Endothelial cell of umbilical vein (primary cell): ENCODE measurements at regions of chr3 and their contacts with region 1.

Region 1: DNA sequence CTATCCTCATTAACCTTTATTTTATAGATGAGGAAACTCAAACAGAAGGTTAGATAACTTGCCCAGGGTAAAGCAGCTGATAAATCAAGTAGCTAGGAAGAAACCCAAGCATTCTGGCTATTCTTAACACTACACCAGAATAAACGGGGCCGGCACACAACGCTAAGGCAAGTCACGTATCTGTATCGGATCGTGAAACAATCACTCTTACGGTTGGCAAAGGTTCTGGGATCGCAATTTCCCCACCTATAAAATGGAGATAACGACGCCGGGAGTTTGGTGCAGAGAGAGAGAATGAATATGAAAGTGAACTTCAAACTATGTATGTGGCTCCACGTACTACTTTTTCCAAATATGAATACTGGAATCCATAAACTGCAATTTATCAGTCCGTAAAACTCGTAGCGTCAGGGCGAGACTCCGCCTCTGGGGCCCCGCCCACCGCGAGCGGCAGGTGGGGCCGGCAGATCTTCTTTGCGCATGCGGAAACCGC is 252 bp upstream of the ARMC8 start:
- DNase-seq: peak; percentile 94
- H3K4me3 ChIP-seq: peak overlapping the region; percentile 74 to 86 (median 81)
- H3K27ac ChIP-seq: peak overlapping the region; percentile 93
- H3K4me1 ChIP-seq: peaks cover 10% of the 10 kb centered on the region
- H3K27me3 ChIP-seq: peaks cover 2 to 5% of the 10 kb centered on the region in 2 experiments
- CTCF ChIP-seq: no peak
- POLR2A ChIP-seq: no peak

Region 2: DNA sequence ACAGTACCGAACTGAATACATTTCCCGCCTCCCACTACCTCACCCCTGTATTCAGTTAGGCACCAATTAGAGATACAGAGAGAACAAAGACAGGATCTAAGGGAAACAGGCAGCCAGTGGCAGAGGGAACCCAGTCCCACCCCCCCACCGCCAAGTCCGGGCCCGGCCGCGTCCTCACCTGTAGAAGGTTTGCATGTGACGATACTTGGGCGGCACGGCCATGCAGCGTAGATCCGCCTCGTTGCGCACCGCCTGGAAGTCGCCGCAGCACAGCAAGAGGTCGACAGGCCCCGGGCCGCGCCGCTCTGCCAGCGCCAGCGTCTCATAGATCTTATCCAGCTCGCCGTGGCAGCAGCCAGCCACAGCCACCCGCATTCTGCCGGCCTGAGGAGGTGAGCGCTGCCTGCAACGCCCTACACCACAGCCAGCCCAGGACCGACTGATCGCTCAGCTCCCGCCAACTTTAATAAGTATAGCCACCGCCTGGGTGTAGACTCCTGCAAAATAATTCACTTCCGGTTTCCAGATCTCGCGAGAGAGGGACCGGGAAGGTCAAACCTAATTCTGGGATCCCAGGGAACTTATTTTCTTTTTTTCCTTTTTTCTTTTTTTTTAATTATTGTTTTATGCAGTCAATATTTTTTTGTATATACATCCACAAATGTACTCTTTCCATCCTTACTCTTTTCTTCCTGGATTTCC is 12.3 kb before region 1 on chr3 and contains the start of gene DBR1:
- CTCF ChIA-PET with region 1: interaction called, 17 read pairs
- POLR2A ChIA-PET with region 1: interaction called, 8 read pairs
- dilution Hi-C with region 1: no loop called
- intact Hi-C with region 1: loop called (anchors 1 kb)
- DNase-seq: peak; percentile 81
- H3K4me3 ChIP-seq: peak within 1 kb of the TSS; percentile 42 to 84 (median 61)
- H3K27ac ChIP-seq: peak within 1 kb of the TSS; percentile 46
- H3K4me1 ChIP-seq: peaks cover 13% of the 10 kb centered on the region
- H3K27me3 ChIP-seq: peaks cover 0 to 3% of the 10 kb centered on the region in 2 experiments
- CTCF ChIP-seq: no peak
- POLR2A ChIP-seq: peak; percentile 96
- total RNA-seq, gene DBR1: 16.5 and 17.8 TPM in 2 replicates

Region 3: GRCh38 chr3:138219255-138219654 is 32.4 kb after region 1 on chr3:
- CTCF ChIA-PET with region 1: no interaction called
- POLR2A ChIA-PET with region 1: no interaction called
- dilution Hi-C with region 1: no loop called
- intact Hi-C with region 1: loop called (anchors 2 kb)
- DNase-seq: peak; percentile 64
- H3K4me3 ChIP-seq: peak overlapping the region in 1 of 3 experiments; percentile 15
- H3K27ac ChIP-seq: peak overlapping the region; percentile 40
- H3K4me1 ChIP-seq: peaks cover 35% of the 10 kb centered on the region
- H3K27me3 ChIP-seq: no peaks in the 10 kb centered on the region
- CTCF ChIP-seq: no peak
- POLR2A ChIP-seq: no peak

Region 4: DNA sequence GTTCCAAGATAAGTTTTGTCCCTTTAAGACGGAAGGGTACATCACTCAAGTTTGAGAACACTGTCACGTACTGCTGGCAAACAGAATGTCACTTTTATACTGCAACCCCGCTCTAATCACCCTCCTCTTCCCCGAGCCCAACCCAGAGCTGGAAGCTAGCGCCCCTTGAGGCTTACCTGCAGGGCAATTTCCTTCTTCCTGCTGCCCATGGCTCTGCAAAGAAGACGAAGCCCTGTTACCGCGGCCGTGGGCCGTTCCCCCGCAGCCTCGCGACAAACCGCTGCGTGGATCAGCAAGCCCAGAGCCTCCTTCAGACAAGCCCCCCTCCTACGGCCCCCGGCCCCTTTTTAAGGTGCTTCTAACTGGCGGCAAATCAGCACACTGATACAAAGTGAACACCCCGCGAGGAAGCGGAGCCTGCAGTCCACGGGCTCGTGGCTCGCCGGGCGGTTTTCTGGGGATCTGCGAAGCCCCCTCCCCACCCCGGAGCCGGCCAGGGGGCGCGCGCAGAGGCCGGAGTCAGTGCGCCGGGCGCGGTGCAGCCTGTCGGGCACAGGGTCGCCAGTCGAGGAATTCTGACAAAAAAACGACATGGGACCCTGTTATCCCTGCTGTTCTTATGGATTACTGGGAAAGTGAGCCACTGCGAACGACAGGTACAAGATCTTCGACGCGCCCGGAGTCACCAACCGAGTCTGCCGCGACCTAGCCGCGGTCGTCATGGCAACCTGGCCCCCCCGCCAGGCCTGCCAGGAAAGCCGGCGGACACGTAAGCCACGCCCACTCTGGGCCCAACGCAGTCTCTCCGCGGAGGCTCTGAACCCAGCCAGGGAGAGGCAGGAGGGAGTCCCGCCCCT is 142.5 kb after region 1 on chr3 and contains the start of gene NME9:
- CTCF ChIA-PET with region 1: interaction called, 3 read pairs
- POLR2A ChIA-PET with region 1: no interaction called
- dilution Hi-C with region 1: no loop called
- intact Hi-C with region 1: loop called (anchors 1 kb)
- DNase-seq: peak; percentile 88
- H3K4me3 ChIP-seq: peak within 1 kb of the TSS; percentile 32 to 53 (median 52)
- H3K27ac ChIP-seq: no peak within 1 kb of the TSS
- H3K4me1 ChIP-seq: peaks cover 20% of the 10 kb centered on the region
- H3K27me3 ChIP-seq: peaks cover 2 to 3% of the 10 kb centered on the region in 2 experiments
- CTCF ChIP-seq: peak; percentile 54 to 69
- POLR2A ChIP-seq: no peak
- total RNA-seq, gene NME9: not detected in 2 replicates

Region 5: DNA sequence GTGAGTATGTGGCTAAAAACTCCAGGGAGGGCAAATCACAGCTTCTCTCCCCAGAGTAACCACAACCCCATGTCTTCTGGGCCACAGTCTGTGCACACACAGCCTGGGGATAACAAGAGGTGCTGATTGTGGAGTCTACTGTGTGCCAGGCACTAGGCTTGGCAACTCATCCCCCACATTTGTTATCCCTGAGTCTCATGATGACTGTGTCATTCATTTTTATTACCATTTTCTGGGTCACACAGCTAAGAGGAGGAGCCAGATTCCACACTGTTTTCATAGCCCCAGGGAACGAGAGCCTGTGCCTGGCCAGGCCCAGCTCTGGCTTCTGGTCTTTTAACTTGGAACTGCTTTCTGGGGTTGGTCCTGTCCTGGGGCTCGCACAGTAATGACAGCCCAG is 282.0 kb after region 1 on chr3:
- CTCF ChIA-PET with region 1: no interaction called
- POLR2A ChIA-PET with region 1: no interaction called
- dilution Hi-C with region 1: no loop called
- intact Hi-C with region 1: no loop called
- DNase-seq: no peak
- H3K4me3 ChIP-seq: no peak overlapping the region
- H3K27ac ChIP-seq: no peak overlapping the region
- H3K4me1 ChIP-seq: peaks cover 6% of the 10 kb centered on the region
- H3K27me3 ChIP-seq: no peaks in the 10 kb centered on the region
- CTCF ChIP-seq: no peak
- POLR2A ChIP-seq: no peak